HEK293 (cell line): ENCODE measurements at regions of chr15 and their contacts with region 1.

Region 1: DNA sequence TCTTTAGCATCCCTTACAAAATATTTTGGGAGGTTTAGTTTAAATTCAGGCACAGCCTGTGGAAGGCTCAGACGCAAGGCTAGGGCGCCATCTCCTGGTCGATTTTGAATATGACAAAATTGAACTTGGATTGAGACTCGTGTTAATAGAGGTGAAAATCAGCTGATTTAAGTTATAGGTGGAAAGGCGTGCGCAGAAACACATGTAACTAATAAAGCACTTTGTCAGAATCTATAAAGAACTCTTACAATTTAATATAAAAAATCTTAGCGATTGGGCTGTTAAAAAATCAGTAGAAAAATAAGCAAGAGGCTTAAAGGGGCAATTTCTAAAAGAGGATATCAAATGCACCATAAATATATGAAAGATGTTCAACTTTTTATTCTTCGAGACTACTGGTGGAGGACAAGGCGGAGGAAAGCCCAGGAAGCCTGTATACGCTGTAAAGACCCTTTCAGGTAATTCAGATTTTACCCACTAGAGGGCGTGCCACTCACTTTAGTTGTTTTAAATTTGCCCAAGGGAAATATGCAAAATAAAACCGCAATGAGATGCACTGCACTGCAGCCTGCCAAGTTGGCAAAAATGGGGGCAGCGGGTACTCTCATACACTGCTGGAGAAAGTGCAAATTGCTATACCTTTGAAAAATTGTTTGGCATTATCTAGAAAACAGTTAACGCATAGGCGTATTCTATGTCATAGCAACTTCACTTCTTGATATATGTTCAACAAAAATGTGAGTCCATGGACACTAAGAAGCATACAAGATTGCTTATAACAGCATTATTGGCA is 64.7 kb downstream of the SLC30A4 start:
- H3K4me3 ChIP-seq: peak overlapping the region; percentile 26
- H3K27ac ChIP-seq: no peak overlapping the region
- H3K4me1 ChIP-seq: no peaks in the 10 kb centered on the region; the same call in 1 of the 2 replicates
- CTCF ChIP-seq: peak; percentile 51; the same call in 1 of the 2 replicates

Region 2: DNA sequence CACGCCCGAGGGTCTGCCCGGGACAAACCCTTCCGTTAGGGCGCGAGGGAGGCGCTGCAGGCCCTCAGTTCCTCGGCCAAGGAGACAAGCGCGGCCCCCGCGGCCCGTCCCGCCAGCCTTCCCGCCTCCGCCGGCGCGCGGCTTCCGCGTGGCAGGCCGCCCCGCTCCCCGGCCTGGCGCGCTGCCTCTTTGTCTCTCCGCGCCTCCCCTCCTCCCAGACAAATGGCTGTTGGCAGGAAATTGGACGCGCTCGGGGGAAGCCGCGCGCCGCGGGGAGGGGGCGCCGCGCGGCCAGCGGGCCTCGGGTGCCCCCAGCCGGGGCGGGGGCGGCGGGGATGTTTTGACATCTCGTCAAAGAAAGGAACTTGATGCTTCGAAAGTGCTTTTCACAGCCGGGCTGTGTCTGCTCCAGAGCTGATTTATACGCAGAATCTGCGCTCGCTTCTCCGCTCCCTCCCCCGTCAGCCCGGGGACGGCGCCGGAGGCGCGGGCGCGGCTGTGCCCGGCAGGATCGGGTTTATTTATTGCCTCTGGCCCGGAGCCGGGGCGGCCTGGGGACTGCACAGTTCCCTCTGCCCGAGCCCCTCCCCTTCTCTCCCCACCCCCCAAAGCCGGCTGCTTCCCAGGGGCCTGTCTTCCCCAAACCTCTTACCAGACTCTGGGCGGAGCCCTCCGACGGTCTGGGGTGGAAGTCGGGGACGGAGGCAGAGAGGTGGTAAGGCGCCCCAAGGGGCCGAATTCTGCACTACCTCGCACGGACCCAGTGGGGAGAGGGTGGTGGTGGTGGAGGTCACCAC is 290.8 kb before region 1 on chr15:
- CTCF ChIA-PET with region 1: interaction called, 23 read pairs
- POLR2A ChIA-PET with region 1: no interaction called
- H3K4me3 ChIP-seq: peak overlapping the region; percentile 42
- H3K27ac ChIP-seq: peak overlapping the region; percentile 95
- H3K4me1 ChIP-seq: 0 out of 2 replicates have a peak, but pooled peaks cover 2% of the 10 kb centered on the region
- CTCF ChIP-seq: peak; percentile 66

Region 3: DNA sequence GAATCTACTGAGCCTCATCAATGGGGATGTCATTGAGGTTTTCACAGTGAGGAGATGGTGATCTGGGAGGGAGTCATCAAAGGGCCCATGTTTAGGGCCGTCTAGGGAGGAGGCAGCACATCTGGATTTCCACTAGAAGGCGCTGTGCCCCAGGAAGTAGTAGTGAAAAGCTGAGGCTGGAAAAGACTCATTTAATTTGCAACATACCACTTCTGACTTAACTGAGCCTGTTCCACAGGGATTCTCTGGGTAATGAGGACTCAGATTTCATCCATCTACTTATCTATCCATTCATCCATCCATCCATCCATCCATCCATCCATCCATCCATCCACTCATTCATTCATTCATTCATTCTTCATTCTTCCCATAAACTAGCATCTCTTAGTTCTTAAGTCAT is 252.6 kb before region 1 on chr15:
- CTCF ChIA-PET with region 1: interaction called, 16 read pairs
- POLR2A ChIA-PET with region 1: no interaction called
- H3K4me3 ChIP-seq: no peak overlapping the region
- H3K27ac ChIP-seq: no peak overlapping the region
- H3K4me1 ChIP-seq: no peaks in the 10 kb centered on the region
- CTCF ChIP-seq: no peak

Region 4: DNA sequence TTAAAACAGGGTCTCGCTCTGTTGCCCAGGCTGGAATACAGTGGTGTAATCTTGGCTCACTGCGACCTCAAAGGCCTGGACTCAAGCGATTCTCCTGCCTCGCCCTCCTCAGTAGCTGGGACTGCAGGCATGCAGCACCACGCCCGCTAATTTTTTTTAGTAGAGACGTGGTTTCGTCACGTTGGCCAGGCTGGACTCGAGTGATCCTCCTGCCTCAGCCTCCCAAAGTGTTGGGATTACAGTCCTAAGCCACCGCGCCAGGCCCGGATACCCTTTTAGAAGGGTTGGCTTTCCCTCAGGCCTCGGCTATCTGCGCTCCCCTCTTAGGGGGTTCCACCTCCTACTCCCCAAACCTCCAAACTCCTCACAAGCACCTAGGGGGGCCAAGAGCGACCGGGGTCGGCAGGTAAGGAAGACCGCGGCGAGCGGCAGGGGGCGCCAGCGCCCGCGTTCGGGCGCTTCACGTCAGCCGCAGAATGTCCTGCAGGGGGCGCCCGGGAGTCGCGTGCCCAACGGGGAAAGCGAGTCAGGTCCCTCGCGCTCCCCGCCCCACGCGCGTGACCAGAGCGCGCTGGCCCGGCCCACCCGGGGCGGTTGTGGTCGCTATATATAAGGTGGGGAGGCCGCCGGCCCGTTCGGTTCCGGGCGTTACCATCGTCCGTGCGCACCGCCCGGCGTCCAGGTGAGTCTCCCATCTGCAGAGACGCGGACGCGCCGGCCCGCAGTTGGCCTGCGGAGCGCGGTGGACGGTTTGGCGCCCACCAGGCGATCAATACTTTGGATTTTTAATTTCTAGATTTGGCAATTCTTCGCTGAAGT is 27.7 kb before region 1 on chr15:
- CTCF ChIA-PET with region 1: interaction called, 109 read pairs
- POLR2A ChIA-PET with region 1: no interaction called
- H3K4me3 ChIP-seq: peak overlapping the region; percentile 46
- H3K27ac ChIP-seq: no peak overlapping the region
- H3K4me1 ChIP-seq: 0 out of 2 replicates have a peak, but pooled peaks cover 3% of the 10 kb centered on the region
- CTCF ChIP-seq: peak; percentile 94

Region 5: DNA sequence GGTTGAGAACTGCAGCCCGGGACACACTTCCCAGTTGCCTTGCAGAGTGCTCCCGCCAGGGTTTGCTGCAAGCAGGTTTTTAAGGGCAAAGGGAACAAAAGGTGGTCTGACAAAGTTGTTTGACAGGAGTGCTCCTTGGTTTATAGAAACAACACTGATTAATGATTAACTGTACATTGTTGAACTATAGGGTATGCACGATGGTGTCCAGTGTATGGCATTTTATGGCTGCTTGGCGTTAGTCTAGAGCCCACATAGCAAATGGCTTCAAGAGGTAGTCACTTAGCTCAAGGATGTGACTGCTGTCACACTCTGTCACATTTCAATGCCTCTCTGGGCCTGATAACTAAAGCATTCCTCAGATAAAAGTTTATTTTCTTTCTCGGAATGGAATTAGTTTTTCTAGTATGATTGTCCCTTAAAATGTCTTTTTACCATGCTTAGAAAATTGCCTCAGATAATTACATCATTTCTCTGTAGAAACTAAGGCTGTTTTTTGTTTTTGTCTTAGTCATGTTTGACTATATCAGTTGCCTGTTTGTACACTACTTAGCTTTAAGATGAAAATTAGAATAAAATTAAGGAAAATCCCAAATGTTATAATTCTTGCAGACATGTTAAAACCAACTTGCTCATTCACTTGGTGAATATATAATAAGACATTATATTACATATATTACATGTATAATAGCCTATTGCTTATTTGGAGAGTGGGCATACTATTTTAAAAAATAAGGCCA is 18.1 kb before region 1 on chr15:
- CTCF ChIA-PET with region 1: interaction called, 11 read pairs
- POLR2A ChIA-PET with region 1: no interaction called
- H3K4me3 ChIP-seq: no peak overlapping the region
- H3K27ac ChIP-seq: no peak overlapping the region
- H3K4me1 ChIP-seq: no peaks in the 10 kb centered on the region
- CTCF ChIP-seq: no peak

Region 6: DNA sequence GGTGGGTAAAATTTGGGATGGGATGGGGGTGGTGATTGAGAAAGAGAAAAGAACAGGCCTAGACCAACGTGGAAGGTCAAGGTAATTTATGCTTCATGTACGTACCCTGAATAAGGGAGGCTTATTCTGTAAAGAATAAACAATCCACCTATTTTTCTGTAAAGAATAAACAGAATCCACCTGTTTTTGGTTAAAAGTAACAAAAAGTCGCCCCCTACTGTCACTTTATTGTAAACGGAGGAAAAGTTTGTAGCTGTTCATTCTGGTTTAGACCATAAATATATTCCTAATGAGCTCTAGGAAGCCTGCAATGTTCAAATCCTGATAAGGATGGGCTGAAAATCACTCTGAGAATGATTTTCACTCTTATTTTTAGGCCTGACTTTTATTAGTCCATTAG is 153.5 kb after region 1 on chr15:
- CTCF ChIA-PET with region 1: interaction called, 84 read pairs
- POLR2A ChIA-PET with region 1: no interaction called
- H3K4me3 ChIP-seq: no peak overlapping the region
- H3K27ac ChIP-seq: no peak overlapping the region
- H3K4me1 ChIP-seq: no peaks in the 10 kb centered on the region
- CTCF ChIP-seq: no peak

Region 7: GRCh38 chr15:45618813-45619212 is 161.0 kb after region 1 on chr15:
- CTCF ChIA-PET with region 1: interaction called, 84 read pairs
- POLR2A ChIA-PET with region 1: no interaction called
- H3K4me3 ChIP-seq: no peak overlapping the region
- H3K27ac ChIP-seq: no peak overlapping the region
- H3K4me1 ChIP-seq: no peaks in the 10 kb centered on the region
- CTCF ChIP-seq: no peak